ENCODE measurements at regions of chr4 and their contacts with region 1.

Region 1: GRCh38 chr4:60805500-60806313 is 394.4 kb upstream of the ADGRL3 start:
- DNase-seq: peak; percentile 9
- H3K4me3 ChIP-seq: no peak overlapping the region; a peak in 1 of 4 replicates
- H3K27ac ChIP-seq: no peak overlapping the region
- H3K4me1 ChIP-seq: no peaks in the 10 kb centered on the region
- H3K27me3 ChIP-seq: no peaks in the 10 kb centered on the region
- CTCF ChIP-seq: peak; percentile 56
- EP300 ChIP-seq: no peak
- RAD21 ChIP-seq: peak; percentile 67

Region 2: DNA sequence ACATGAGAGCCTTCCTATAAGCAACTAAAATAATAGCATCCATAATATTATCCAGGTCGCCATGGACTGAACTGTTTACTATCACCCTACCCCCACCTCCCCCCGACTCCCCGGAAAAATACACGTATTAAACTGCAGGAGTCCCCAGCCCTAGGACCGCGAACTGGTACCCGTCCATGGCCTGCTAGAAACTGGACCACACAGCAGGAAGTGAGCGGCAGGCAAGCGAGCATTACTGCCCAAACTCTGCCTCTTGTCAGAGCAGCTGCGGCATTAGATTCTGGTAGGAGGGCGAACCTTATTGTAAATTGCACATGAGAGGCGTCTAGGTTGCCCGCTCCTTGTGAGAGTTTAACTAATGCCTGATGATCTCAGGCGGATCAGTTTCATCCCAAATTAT is 11.3 kb before region 1 on chr4:
- CTCF ChIA-PET with region 1: interaction called, 17 read pairs
- POLR2A ChIA-PET with region 1: no interaction called
- DNase-seq: no peak
- H3K4me3 ChIP-seq: no peak overlapping the region
- H3K27ac ChIP-seq: no peak overlapping the region
- H3K4me1 ChIP-seq: no peaks in the 10 kb centered on the region
- H3K27me3 ChIP-seq: no peaks in the 10 kb centered on the region
- CTCF ChIP-seq: no peak
- EP300 ChIP-seq: no peak
- RAD21 ChIP-seq: no peak

Region 3: DNA sequence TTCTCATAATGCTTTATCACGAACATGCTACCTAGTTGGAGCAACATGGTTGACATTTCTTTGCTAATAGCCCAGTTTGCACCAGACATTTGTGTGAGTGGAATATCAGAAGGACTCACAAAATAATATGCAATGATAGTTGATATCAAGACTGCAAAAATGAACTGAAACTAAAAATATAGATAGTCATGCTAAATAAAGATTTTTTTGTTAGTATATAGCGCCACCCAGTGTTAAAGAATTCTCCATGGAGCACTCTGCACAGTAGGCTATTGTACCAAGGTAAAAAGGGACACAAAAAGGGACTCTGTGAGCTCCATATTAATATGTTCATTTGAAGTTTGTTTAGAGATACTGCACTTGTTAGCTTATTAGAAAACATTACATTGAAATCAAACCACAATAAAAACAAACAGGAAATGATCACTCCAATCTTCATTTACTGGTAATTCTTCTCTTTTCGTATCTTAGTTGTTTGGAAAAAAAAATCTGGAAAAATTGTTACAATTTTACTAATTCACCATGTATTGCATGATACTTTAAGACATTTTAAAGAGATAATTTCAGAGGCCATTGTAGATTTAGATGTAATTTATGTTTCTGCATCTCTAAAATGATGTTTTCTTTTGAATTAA is 1904.0 kb after region 1 on chr4:
- CTCF ChIA-PET with region 1: interaction called, 19 read pairs
- POLR2A ChIA-PET with region 1: no interaction called
- DNase-seq: peak; percentile 16
- H3K4me3 ChIP-seq: peak overlapping the region; percentile 17 to 27; a peak in 2 of 4 replicates
- H3K27ac ChIP-seq: no peak overlapping the region
- H3K4me1 ChIP-seq: no peaks in the 10 kb centered on the region
- H3K27me3 ChIP-seq: no peaks in the 10 kb centered on the region
- CTCF ChIP-seq: peak; percentile 76
- EP300 ChIP-seq: no peak
- RAD21 ChIP-seq: peak; percentile 84